ENCODE measurements at regions of chr6 and their contacts with region 1.

Region 1: GRCh38 chr6:74409447-74409846 is 713.4 kb downstream of the CD109 start:
- DNase-seq: no peak
- H3K4me3 ChIP-seq: no peak overlapping the region
- H3K27ac ChIP-seq: peak overlapping the region in 1 of 4 donors; percentile 17
- H3K4me1 ChIP-seq: peaks cover 0 to 9% (median 0%) of the 10 kb centered on the region in 4 donors
- H3K27me3 ChIP-seq: no peaks in the 10 kb centered on the region
- CTCF ChIP-seq: peak; percentile 62 to 69 (median 63)
- EP300 ChIP-seq: no peak
- POLR2A ChIP-seq: no peak

Region 2: GRCh38 chr6:74137911-74138310 is 271.5 kb before region 1 on chr6:
- intact Hi-C with region 1: no loop called
- DNase-seq: no peak
- H3K4me3 ChIP-seq: no peak overlapping the region
- H3K27ac ChIP-seq: no peak overlapping the region
- H3K4me1 ChIP-seq: no peaks in the 10 kb centered on the region
- H3K27me3 ChIP-seq: no peaks in the 10 kb centered on the region
- CTCF ChIP-seq: no peak
- EP300 ChIP-seq: no peak
- POLR2A ChIP-seq: no peak

Region 3: GRCh38 chr6:74631564-74631963 is 222.1 kb after region 1 on chr6:
- intact Hi-C with region 1: no loop called
- DNase-seq: no peak
- H3K4me3 ChIP-seq: no peak overlapping the region
- H3K27ac ChIP-seq: no peak overlapping the region
- H3K4me1 ChIP-seq: peaks cover 0 to 5% (median 0%) of the 10 kb centered on the region in 4 donors
- H3K27me3 ChIP-seq: no peaks in the 10 kb centered on the region
- CTCF ChIP-seq: no peak
- EP300 ChIP-seq: no peak
- POLR2A ChIP-seq: no peak

Region 4: GRCh38 chr6:74991573-74992332 is 582.3 kb after region 1 on chr6:
- intact Hi-C with region 1: loop called (anchors 5 kb)
- DNase-seq: no peak
- H3K4me3 ChIP-seq: no peak overlapping the region
- H3K27ac ChIP-seq: no peak overlapping the region
- H3K4me1 ChIP-seq: peaks cover 0 to 26% (median 23%) of the 10 kb centered on the region in 4 donors
- H3K27me3 ChIP-seq: no peaks in the 10 kb centered on the region
- CTCF ChIP-seq: peak in 1 of 3 experiments; percentile 5
- EP300 ChIP-seq: no peak
- POLR2A ChIP-seq: no peak

Region 5: GRCh38 chr6:75084872-75085381 is 675.5 kb after region 1 on chr6:
- intact Hi-C with region 1: loop called (anchors 10 kb)
- DNase-seq: no peak
- H3K4me3 ChIP-seq: peak overlapping the region; percentile 42 to 49 (median 48)
- H3K27ac ChIP-seq: peak overlapping the region; percentile 71 to 78 (median 71)
- H3K4me1 ChIP-seq: peaks cover 0 to 33% (median 30%) of the 10 kb centered on the region in 4 donors
- H3K27me3 ChIP-seq: no peaks in the 10 kb centered on the region
- CTCF ChIP-seq: no peak
- EP300 ChIP-seq: no peak
- POLR2A ChIP-seq: no peak

Measured in esophagus muscularis mucosa (tissue), 4 donors.